ENCODE measurements at regions of chr4 and their contacts with region 1.

Region 1: GRCh38 chr4:26372525-26373172 is 51.8 kb downstream of the RBPJ start:
- DNase-seq: peak; percentile 58
- H3K4me3 Mint-ChIP-seq: peak overlapping the region; percentile 3
- H3K27ac Mint-ChIP-seq: peak overlapping the region; percentile 56
- H3K4me1 Mint-ChIP-seq: peaks cover 72% of the 10 kb centered on the region
- H3K27me3 Mint-ChIP-seq: no peaks in the 10 kb centered on the region

Region 2: DNA sequence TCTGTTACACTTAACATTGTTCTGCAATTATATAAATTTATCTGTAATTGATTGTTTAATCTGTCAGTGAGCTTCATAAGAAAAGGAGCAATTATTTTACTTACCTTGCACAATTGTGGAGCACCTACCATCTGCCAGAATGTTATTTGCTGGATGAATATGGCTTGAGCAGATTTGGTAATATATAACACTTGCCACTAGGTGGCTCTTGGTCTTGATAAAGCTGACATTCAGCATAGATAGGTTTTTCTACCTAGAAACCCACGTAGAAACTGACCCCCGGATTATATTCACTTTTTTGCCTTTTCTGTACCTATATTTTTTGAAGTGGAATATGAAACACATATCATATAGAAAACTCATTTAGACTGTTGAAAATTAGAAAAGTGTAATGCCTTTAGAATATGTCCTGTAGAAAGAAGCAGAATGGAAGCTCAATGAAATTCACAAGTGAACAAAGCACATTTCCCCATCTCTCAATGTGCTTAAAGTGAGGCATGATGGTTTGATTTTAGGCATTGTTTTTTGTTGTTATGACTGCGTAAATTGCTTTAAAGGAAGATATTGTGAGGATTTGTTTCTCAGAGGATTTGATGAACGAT is 42.4 kb before region 1 on chr4:
- intact Hi-C with region 1: loop called (anchors 5 kb)
- DNase-seq: no peak
- H3K4me3 Mint-ChIP-seq: peak overlapping the region; percentile 4
- H3K27ac Mint-ChIP-seq: peak overlapping the region; percentile 10
- H3K4me1 Mint-ChIP-seq: peaks cover 59% of the 10 kb centered on the region
- H3K27me3 Mint-ChIP-seq: no peaks in the 10 kb centered on the region

Region 3: GRCh38 chr4:26356081-26356501 is 16.6 kb before region 1 on chr4:
- intact Hi-C with region 1: loop called (anchors 2 kb)
- DNase-seq: no peak
- H3K4me3 Mint-ChIP-seq: no peak overlapping the region
- H3K27ac Mint-ChIP-seq: no peak overlapping the region
- H3K4me1 Mint-ChIP-seq: peaks cover 31% of the 10 kb centered on the region
- H3K27me3 Mint-ChIP-seq: no peaks in the 10 kb centered on the region

Measured in activated T-helper 2 cell treated with anti-CD3 and anti-CD28 coated beads, Interferon-gamma antibody, Interleukin-2, Interleukin-4, amounts not matched to agents 10 μg/mL and 5 μg/mL and 100 μg/mL, durations not matched to agents 14 hours and 24 hours and 36 hours (primary cell).